Heart right ventricle (tissue), 16 donors: ENCODE measurements at regions of chr1 and their contacts with region 1.

Region 1: GRCh38 chr1:205396967-205397616 is 24.8 kb downstream of the LEMD1 start:
- DNase-seq: peak in 1 of 2 donors; percentile 30
- ATAC-seq: peak in 6 of 8 donors; percentile 30 to 78 (median 50)
- H3K4me3 ChIP-seq: no peak overlapping the region
- H3K27ac ChIP-seq: no peak overlapping the region
- H3K4me1 ChIP-seq: no peaks in the 10 kb centered on the region
- H3K27me3 ChIP-seq: peaks cover 0 to 31% (median 12%) of the 10 kb centered on the region in 7 donors
- CTCF ChIP-seq: peak; percentile 53 to 84 (median 79)

Region 2: GRCh38 chr1:205430696-205431305 is 33.7 kb after region 1 on chr1:
- intact Hi-C with region 1: loop called in 7 of 10 experiments (anchors 1 to 5 kb)
- DNase-seq: peak; percentile 51 to 60
- ATAC-seq: peak; percentile 65 to 85 (median 80)
- H3K4me3 ChIP-seq: peak overlapping the region; percentile 12 to 60 (median 53)
- H3K27ac ChIP-seq: peak overlapping the region in 2 of 10 donors; percentile 10 to 35
- H3K4me1 ChIP-seq: peaks cover 0 to 9% (median 7%) of the 10 kb centered on the region in 9 donors
- H3K27me3 ChIP-seq: peaks cover 0 to 14% (median 0%) of the 10 kb centered on the region in 7 donors
- CTCF ChIP-seq: peak; percentile 59 to 87 (median 78)

Region 3: GRCh38 chr1:205440476-205441317 is 43.6 kb after region 1 on chr1:
- intact Hi-C with region 1: loop called in 2 of 10 experiments (anchors 5 kb)
- DNase-seq: peak in 1 of 2 donors; percentile 47
- ATAC-seq: peak in 7 of 8 donors; percentile 44 to 70 (median 52)
- H3K4me3 ChIP-seq: peak overlapping the region in 1 of 10 donors; percentile 27
- H3K27ac ChIP-seq: peak overlapping the region in 9 of 10 donors; percentile 1 to 74 (median 40)
- H3K4me1 ChIP-seq: peaks cover 13 to 74% (median 58%) of the 10 kb centered on the region in 9 donors
- H3K27me3 ChIP-seq: peaks cover 0 to 9% (median 0%) of the 10 kb centered on the region in 7 donors
- CTCF ChIP-seq: no peak

Region 4: DNA sequence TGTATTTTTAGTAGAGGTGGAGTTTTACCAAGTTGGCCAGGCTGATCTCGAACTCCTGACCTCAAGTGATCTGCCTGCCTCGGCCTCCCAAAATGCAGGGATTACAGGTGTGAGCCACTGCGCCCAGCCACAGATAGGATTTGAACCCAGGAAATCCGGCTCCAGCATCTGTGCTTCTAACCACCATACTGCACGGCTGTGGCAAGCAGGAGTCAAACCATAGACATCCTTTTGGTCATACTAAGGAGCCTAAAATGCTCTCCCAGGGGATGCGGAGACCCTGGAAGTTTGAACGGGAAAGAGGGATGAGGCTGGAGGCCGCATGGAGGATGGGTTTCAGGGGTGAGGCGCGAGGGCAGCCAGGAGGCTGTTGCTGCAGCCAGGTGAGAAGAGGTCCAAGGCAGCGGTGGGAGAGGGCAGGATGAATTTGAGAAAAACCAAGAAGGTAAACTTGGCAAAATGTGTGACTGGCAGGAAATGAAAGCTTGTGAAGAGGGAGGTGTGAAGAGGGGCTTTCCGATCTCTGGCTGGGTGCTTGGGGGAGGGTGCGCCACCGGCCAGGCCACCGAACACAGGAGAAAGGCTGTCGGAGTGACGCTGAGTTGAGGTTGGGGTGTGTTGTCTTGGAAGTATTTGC is 83.4 kb after region 1 on chr1:
- intact Hi-C with region 1: loop called in 9 of 10 experiments (anchors 1 to 5 kb)
- DNase-seq: no peak
- ATAC-seq: no peak
- H3K4me3 ChIP-seq: no peak overlapping the region
- H3K27ac ChIP-seq: no peak overlapping the region
- H3K4me1 ChIP-seq: peaks cover 0 to 13% (median 4%) of the 10 kb centered on the region in 9 donors
- H3K27me3 ChIP-seq: peaks cover 0 to 64% (median 33%) of the 10 kb centered on the region in 7 donors
- CTCF ChIP-seq: no peak

Region 5: GRCh38 chr1:205523891-205524793 is 127.0 kb after region 1 on chr1:
- intact Hi-C with region 1: loop called in 3 of 10 experiments (anchors 2 to 5 kb)
- DNase-seq: peak; percentile 80 to 84
- ATAC-seq: peak; percentile 35 to 71 (median 50)
- H3K4me3 ChIP-seq: no peak overlapping the region
- H3K27ac ChIP-seq: peak overlapping the region in 1 of 10 donors; percentile 55
- H3K4me1 ChIP-seq: peaks cover 21 to 85% (median 59%) of the 10 kb centered on the region in 9 donors
- H3K27me3 ChIP-seq: no peaks in the 10 kb centered on the region
- CTCF ChIP-seq: peak; percentile 56 to 88 (median 83)

Region 6: GRCh38 chr1:205528887-205529825 is 132.1 kb after region 1 on chr1:
- intact Hi-C with region 1: loop called in 3 of 10 experiments (anchors 2 to 5 kb)
- DNase-seq: peak; percentile 82 to 85
- ATAC-seq: peak; percentile 57 to 85 (median 79)
- H3K4me3 ChIP-seq: peak overlapping the region in 9 of 10 donors; percentile 9 to 50 (median 46)
- H3K27ac ChIP-seq: peak overlapping the region in 3 of 10 donors; percentile 11 to 47 (median 44)
- H3K4me1 ChIP-seq: peaks cover 11 to 41% (median 22%) of the 10 kb centered on the region in 9 donors
- H3K27me3 ChIP-seq: no peaks in the 10 kb centered on the region
- CTCF ChIP-seq: peak; percentile 89 to 99 (median 95)